ENCODE measurements at regions of chr11 and their contacts with region 1.

Region 1: GRCh38 chr11:236774-237767 is at the start of gene PSMD13:
- DNase-seq: peak; percentile 93
- H3K4me3 Mint-ChIP-seq: peak within 1 kb of the TSS; percentile 97
- H3K27ac Mint-ChIP-seq: peak within 1 kb of the TSS; percentile 94
- H3K4me1 Mint-ChIP-seq: peaks cover 49% of the 10 kb centered on the region
- H3K27me3 Mint-ChIP-seq: no peaks in the 10 kb centered on the region
- total RNA-seq, gene PSMD13: 210 to 214 TPM

Region 2: DNA sequence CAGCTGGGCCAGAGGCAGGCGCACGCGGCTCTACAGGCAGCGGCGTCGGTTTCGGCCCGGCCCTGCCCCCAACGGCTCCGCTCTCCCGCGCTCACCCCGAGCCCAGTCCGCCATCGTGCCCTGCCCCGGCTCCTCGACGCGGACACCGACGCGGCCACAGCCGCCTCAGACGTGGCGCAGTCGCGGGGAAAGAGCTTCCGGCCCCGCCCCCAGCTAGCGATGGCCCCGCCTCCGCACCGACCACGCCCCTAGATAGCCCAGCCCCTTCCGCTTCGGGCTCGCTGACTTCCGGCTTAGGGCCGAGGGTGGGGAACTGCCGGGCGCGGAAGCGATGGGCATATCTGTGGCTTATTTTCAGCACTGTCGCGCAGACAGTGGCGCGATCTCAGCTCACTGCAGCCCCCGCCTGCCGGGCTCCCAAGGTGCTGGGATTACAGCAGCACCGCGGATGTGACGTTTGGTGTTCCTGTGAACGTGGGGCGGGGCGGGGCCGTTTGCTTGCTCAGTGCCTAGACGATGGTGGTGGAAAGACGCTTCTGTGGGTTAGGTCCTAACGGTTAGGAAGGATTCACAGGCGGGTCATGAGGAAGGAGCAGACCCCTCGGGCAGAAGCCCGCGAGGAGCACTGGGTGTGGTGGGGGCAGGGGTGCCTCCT is 29.7 kb before region 1 on chr11 and contains the starts of genes BET1L and RIC8A:
- CTCF ChIA-PET with region 1: interaction called, 4 read pairs
- POLR2A ChIA-PET with region 1: interaction called, 32 read pairs
- intact Hi-C with region 1: loop called (anchors 1 kb)
- DNase-seq: peak; percentile 98
- H3K4me3 Mint-ChIP-seq: peak within 1 kb of the TSS; percentile 97
- H3K27ac Mint-ChIP-seq: peak within 1 kb of the TSS; percentile 99
- H3K4me1 Mint-ChIP-seq: peaks cover 55% of the 10 kb centered on the region
- H3K27me3 Mint-ChIP-seq: no peaks in the 10 kb centered on the region
- total RNA-seq, gene BET1L: 51.0 to 53.2 TPM
- total RNA-seq, gene RIC8A: 100 to 104 TPM

Region 3: GRCh38 chr11:288328-289144 is 51.5 kb after region 1 on chr11 and contains the start of gene PGGHG:
- CTCF ChIA-PET with region 1: no interaction called
- POLR2A ChIA-PET with region 1: interaction called, 3 read pairs
- intact Hi-C with region 1: loop called (anchors 5 kb)
- DNase-seq: peak; percentile 61
- H3K4me3 Mint-ChIP-seq: peak within 1 kb of the TSS; percentile 96
- H3K27ac Mint-ChIP-seq: peak within 1 kb of the TSS; percentile 95
- H3K4me1 Mint-ChIP-seq: peaks cover 27% of the 10 kb centered on the region
- H3K27me3 Mint-ChIP-seq: no peaks in the 10 kb centered on the region
- total RNA-seq, gene PGGHG: 74.3 to 75.0 TPM

Region 4: GRCh38 chr11:313787-314547 is 76.9 kb after region 1 on chr11 and contains the start of gene IFITM1:
- CTCF ChIA-PET with region 1: interaction called, 3 read pairs
- POLR2A ChIA-PET with region 1: interaction called, 4 read pairs
- intact Hi-C with region 1: loop called (anchors 1 kb)
- DNase-seq: peak; percentile 80
- H3K4me3 Mint-ChIP-seq: peak within 1 kb of the TSS; percentile 97
- H3K27ac Mint-ChIP-seq: peak within 1 kb of the TSS; percentile 100
- H3K4me1 Mint-ChIP-seq: peaks cover 36% of the 10 kb centered on the region
- H3K27me3 Mint-ChIP-seq: no peaks in the 10 kb centered on the region
- total RNA-seq, gene IFITM1: 195 to 200 TPM

Region 5: GRCh38 chr11:355581-356458 is 118.7 kb after region 1 on chr11:
- CTCF ChIA-PET with region 1: interaction called, 3 read pairs
- POLR2A ChIA-PET with region 1: interaction called, 3 read pairs
- intact Hi-C with region 1: loop called (anchors 1 kb)
- DNase-seq: peak; percentile 92
- H3K4me3 Mint-ChIP-seq: no peak overlapping the region
- H3K27ac Mint-ChIP-seq: no peak overlapping the region
- H3K4me1 Mint-ChIP-seq: peaks cover 32% of the 10 kb centered on the region
- H3K27me3 Mint-ChIP-seq: no peaks in the 10 kb centered on the region

Region 6: DNA sequence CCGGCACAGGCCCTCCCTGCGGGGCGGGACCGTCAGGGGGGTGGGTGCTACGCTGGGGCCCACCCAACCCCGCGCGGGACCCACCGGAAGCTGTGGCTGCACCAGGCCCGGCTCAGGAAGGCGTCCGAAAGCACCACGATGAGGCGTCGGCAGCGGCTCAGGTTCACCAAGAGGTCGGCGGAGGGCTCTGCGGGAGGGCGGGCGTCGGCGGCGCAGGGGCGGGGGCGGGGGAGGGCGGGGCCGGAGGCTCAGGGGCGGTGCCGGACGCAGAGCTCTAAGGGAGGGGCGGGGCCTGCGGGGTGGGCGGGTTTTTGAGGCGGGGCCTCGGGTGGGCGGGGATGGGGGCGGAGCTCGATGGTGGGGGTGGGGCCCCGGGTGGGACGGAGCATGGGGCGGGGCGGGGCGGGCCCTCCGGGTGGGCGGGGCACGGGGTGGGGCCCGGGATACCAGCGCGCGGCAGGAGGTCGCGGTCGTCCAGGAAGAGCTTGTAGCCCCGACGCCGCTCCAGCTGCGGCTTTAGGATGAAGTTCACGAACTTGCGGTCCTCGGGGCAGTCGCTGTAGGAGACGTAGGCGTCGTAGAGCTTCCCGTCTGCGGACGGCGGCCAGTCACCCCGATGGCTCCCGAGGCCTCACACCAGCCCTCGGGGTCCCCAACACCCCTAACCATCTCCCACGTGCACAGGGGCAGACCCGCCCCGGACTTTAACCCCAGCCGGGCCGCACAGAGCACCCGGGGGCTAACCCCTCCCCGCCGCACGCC is 170.1 kb after region 1 on chr11:
- CTCF ChIA-PET with region 1: no interaction called
- POLR2A ChIA-PET with region 1: interaction called, 5 read pairs
- intact Hi-C with region 1: loop called (anchors 2 kb)
- DNase-seq: peak; percentile 94
- H3K4me3 Mint-ChIP-seq: peak overlapping the region; percentile 46
- H3K27ac Mint-ChIP-seq: no peak overlapping the region
- H3K4me1 Mint-ChIP-seq: peaks cover 5% of the 10 kb centered on the region
- H3K27me3 Mint-ChIP-seq: no peaks in the 10 kb centered on the region

Region 7: GRCh38 chr11:447923-448731 is 211.1 kb after region 1 on chr11:
- CTCF ChIA-PET with region 1: no interaction called
- POLR2A ChIA-PET with region 1: no interaction called
- intact Hi-C with region 1: no loop called
- DNase-seq: peak; percentile 97
- H3K4me3 Mint-ChIP-seq: peak overlapping the region; percentile 90
- H3K27ac Mint-ChIP-seq: peak overlapping the region; percentile 95
- H3K4me1 Mint-ChIP-seq: peaks cover 21% of the 10 kb centered on the region
- H3K27me3 Mint-ChIP-seq: peaks cover 2% of the 10 kb centered on the region

Region 8: DNA sequence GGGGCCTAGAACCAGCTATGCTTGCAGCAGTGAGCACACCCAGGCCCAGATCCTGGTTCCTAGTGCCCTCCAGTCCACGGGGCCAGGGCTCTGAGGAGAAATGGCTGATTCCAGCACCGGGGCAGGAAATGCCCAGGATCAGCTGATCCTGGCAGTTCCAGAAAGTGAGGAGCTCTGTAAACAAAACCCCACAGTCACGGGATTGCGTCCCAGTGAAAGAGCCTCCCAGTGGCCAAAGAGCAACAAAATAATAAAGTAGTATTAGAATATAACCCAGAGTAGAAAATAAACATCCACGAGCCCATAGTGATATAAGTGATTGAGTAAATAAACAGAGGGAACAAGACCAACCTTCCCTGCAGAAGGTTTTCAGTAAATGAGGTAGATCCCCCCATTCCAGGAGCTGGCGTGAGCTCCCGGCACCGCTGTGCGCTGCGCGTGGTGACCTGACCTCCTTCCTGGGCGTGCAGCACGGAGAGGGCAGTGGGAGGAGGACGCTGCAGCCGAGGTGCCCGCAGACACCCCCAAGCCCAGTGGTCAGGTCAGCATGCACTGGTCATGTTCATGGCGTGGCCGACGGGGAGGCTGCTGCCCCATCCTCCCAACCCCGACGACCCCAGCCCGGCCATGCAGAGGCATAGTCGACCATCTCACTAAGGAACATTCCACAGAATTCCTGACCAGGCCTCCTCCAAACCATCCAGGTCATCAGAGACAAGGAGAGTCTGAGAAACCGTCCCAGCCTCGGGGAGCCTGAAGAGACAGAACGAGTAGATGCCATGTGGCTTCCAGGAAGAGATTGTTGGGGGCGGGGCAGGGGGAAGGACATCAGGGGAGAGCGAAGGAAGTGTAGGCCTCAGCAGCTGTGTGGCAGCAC is 232.9 kb after region 1 on chr11:
- CTCF ChIA-PET with region 1: no interaction called
- POLR2A ChIA-PET with region 1: no interaction called
- intact Hi-C with region 1: no loop called
- DNase-seq: no peak
- H3K4me3 Mint-ChIP-seq: no peak overlapping the region
- H3K27ac Mint-ChIP-seq: no peak overlapping the region
- H3K4me1 Mint-ChIP-seq: no peaks in the 10 kb centered on the region
- H3K27me3 Mint-ChIP-seq: no peaks in the 10 kb centered on the region

Measured in activated CD4-positive, alpha-beta memory T cell treated with anti-CD3 and anti-CD28 coated beads for 36 hours (primary cell).